Endothelial cell of umbilical vein (primary cell): ENCODE measurements at regions of chr1 and their contacts with region 1.

Region 1: DNA sequence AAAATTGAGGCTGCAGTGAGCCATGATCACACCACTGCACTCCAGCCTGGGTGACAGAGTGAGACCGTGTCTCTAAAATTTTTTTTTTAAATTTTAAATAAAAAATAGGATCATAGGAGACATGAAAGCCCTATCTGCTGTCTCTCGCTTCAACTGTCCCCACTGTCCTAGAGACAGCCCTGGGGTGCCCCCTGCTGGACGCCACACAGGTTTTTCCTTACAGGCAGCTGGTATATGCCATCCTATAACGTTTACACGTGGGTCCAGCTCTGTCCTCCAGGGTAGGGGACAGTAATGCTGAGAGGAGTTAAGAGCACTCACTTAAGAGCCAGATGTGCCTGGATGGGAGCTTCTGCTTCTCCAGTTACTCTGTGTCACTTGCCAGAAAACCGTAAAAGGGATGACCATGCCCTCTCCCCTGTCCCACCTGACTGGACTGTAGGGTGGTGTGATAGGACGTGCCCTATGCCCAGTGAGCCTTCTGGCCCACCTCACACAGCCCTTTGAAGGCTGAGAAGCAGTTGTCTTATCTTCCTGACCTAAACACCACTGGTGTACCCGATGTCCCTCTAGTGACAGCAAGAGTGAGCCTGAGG is 8.5 kb downstream of the FBXO2 start:
- DNase-seq: peak; percentile 64
- H3K4me3 ChIP-seq: no peak overlapping the region
- H3K27ac ChIP-seq: no peak overlapping the region
- H3K4me1 ChIP-seq: no peaks in the 10 kb centered on the region
- H3K27me3 ChIP-seq: no peaks in the 10 kb centered on the region
- CTCF ChIP-seq: peak; percentile 72 to 84
- POLR2A ChIP-seq: no peak

Region 2: DNA sequence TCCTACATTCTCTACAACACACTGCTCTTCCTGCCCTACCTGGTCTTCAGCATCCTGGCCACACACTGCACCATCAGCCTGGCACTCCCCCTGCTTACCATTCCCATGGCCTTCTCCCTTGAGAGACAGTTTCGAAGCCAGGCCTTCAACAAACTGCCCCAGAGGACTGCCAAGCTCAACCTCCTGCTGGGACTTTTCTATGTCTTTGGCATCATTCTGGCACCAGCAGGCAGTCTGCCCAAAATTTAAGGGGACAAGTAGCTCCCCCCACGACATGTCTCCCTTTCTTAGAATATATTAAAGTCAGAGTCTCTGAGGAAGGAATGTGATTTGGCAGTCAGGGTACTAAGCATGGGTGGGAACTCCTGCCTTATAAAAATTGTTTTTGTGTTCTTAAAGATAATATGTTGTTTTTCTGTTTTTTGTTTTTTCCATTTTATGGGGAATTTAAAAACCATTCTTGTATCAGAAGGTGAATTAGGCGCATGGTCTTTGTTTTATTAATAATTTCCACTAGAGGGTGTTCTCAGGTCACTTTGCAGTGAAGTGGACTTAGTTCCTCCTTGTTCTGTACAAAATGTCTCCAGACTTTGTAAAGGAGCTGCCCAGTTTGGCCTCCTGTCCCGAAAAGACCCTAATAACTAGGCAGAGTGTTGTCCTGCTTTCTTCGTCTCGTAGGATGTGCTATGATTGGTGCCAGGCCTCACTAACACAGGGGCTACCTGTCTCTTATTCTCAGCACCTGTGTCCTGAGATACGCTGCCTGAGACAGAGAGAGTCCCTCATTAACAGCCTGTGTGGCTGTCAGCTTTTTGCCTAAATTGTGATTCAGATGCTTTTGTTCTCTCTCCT is 359.7 kb before region 1 on chr1:
- CTCF ChIA-PET with region 1: interaction called, 10 read pairs
- POLR2A ChIA-PET with region 1: no interaction called
- dilution Hi-C with region 1: no loop called
- intact Hi-C with region 1: no loop called
- DNase-seq: peak; percentile 18
- H3K4me3 ChIP-seq: no peak overlapping the region
- H3K27ac ChIP-seq: no peak overlapping the region
- H3K4me1 ChIP-seq: peaks cover 12% of the 10 kb centered on the region
- H3K27me3 ChIP-seq: no peaks in the 10 kb centered on the region
- CTCF ChIP-seq: no peak
- POLR2A ChIP-seq: no peak

Region 3: GRCh38 chr1:11478571-11479374 is 167.0 kb before region 1 on chr1 and contains the start of gene DISP3:
- CTCF ChIA-PET with region 1: interaction called, 5 read pairs
- POLR2A ChIA-PET with region 1: no interaction called
- dilution Hi-C with region 1: no loop called
- intact Hi-C with region 1: loop called (anchors 1 kb)
- DNase-seq: peak; percentile 56
- H3K4me3 ChIP-seq: peak within 1 kb of the TSS; percentile 3 to 53 (median 3)
- H3K27ac ChIP-seq: peak within 1 kb of the TSS; percentile 55
- H3K4me1 ChIP-seq: peaks cover 4% of the 10 kb centered on the region
- H3K27me3 ChIP-seq: peaks cover 3 to 8% of the 10 kb centered on the region in 2 experiments
- CTCF ChIP-seq: peak; percentile 84 to 86
- POLR2A ChIP-seq: no peak
- total RNA-seq, gene DISP3: 0.49 and 0.51 TPM in 2 replicates

Region 4: DNA sequence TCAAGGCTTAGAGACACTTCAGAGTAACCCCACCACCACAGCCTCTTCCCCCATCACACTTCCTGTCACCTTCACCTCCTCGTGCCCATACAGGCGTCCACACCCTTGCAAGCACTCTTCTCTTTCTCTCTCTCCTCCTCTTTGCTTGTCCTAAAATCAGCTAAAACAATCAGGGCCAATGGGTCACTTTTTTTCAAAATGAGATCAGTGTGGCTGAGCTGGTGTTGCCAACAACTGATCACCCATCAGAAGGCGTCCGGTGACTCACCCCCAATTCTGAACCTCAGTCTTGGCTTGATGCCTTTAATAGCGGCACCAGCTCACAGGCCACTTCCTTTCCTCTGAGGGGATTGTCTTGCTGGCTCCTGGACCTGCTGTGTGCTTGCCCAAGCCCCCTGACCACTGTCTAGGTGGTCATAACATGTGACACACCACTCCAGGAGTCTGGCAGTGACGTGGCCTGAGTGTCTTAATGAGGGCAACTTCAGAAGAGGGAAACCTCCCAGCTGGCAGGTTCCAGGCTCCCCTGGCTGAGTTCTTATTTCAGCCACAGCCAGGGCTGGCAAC is 47.3 kb after region 1 on chr1:
- CTCF ChIA-PET with region 1: interaction called, 10 read pairs
- POLR2A ChIA-PET with region 1: no interaction called
- dilution Hi-C with region 1: no loop called
- intact Hi-C with region 1: loop called (anchors 1 kb)
- DNase-seq: peak; percentile 87
- H3K4me3 ChIP-seq: no peak overlapping the region
- H3K27ac ChIP-seq: no peak overlapping the region
- H3K4me1 ChIP-seq: peaks cover 19% of the 10 kb centered on the region
- H3K27me3 ChIP-seq: peaks cover 25 to 32% of the 10 kb centered on the region in 2 experiments
- CTCF ChIP-seq: no peak
- POLR2A ChIP-seq: no peak

Region 5: DNA sequence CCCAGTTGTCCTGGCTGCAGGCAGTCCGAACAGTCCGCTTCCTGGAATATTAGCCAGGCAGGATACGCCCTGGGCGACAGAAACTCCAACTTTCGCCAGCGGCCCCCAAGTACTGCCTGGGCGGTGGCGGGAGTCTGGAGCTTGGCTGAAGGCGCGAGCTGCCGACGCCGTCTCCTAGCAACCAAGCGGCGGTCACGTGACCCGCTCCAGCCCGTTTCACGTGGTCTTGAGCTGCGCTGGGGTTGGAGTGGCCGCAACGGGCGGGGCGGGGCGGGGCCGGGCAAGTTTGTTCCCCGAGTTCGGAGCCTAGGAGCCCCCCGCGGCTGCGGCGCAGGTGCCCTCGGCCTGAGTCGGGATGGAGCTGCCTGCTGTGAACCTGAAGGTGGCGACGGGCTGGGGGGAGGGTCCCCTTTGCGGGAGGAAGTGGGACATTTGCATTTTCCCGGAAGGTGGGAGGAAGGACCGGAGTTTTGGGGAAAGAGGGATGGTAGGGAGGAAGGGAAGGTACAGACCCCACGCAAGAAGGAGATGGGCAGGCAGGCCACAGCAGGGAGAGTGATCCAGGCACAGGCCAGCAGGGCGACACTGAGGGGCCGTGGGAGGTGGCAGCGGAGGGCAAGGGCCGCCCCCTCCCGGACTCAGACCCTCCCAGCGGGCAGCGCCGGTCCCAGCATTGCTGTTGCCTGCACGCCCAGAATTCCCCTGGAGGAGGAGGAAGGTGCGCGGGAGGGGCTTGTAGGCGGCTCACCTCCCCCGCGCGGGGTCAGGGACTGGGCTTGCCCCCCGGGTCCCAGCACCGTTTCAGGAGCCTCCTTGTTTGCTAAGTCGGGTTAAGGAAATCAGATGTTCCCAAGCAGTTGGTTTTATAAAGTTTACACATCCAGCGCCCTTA is 90.3 kb after region 1 on chr1 and contains the start of gene AGTRAP:
- CTCF ChIA-PET with region 1: interaction called, 17 read pairs
- POLR2A ChIA-PET with region 1: no interaction called
- dilution Hi-C with region 1: no loop called
- intact Hi-C with region 1: no loop called
- DNase-seq: peak; percentile 89
- H3K4me3 ChIP-seq: peak within 1 kb of the TSS; percentile 42 to 93 (median 57)
- H3K27ac ChIP-seq: peak within 1 kb of the TSS; percentile 18
- H3K4me1 ChIP-seq: peaks cover 14% of the 10 kb centered on the region
- H3K27me3 ChIP-seq: no peaks in the 10 kb centered on the region
- CTCF ChIP-seq: peak in 1 of 2 donors; percentile 29
- POLR2A ChIP-seq: no peak
- total RNA-seq, gene AGTRAP: 40.3 and 41.6 TPM in 2 replicates

Region 6: DNA sequence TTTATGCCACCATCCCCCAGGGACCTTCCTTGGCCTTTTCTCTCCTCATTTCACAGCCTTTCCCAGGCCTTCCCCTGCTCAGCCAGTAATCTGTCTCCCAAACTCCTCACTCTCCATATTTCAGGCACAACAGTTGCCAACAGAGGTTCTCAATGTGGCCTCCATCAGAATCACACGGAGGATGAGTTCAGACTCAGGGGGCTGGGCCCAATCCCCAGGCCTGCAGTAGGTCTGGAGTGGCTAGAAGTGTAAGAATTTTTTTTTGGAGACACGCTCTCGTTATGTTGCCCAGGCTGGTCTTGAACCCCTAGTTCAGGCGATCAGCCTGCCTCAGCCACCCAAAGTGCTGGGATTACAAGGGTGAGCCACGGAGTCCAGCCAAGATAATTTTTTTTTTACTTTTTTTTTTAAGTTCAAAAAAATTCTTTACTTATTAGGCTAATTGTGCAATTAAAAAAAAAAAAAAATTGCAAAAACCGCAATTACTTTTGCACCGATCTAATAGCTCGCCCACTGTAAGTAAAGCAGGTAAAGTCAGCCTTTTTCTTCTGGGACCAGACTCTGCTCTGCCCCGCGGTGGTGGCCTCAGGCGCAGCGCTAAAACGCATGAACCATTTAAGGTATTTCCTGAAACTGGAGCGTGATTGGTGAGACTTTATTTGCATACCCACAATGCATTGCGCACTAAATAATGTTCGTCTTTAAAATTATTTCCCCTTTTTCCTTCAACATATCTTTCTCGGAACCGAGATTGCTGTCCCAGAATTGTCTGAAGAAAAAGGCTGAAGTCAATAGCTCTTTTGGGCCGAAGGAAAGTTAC is 261.7 kb after region 1 on chr1:
- CTCF ChIA-PET with region 1: no interaction called
- POLR2A ChIA-PET with region 1: interaction called, 3 read pairs
- dilution Hi-C with region 1: no loop called
- intact Hi-C with region 1: loop called (anchors 2 kb)
- DNase-seq: peak; percentile 97
- H3K4me3 ChIP-seq: no peak overlapping the region
- H3K27ac ChIP-seq: peak overlapping the region; percentile 100
- H3K4me1 ChIP-seq: peaks cover 3% of the 10 kb centered on the region
- H3K27me3 ChIP-seq: no peaks in the 10 kb centered on the region
- CTCF ChIP-seq: peak; percentile 50 to 89
- POLR2A ChIP-seq: no peak